AG04450 (cell line): ENCODE measurements at regions of chr19 and their contacts with region 1.

Region 1: DNA sequence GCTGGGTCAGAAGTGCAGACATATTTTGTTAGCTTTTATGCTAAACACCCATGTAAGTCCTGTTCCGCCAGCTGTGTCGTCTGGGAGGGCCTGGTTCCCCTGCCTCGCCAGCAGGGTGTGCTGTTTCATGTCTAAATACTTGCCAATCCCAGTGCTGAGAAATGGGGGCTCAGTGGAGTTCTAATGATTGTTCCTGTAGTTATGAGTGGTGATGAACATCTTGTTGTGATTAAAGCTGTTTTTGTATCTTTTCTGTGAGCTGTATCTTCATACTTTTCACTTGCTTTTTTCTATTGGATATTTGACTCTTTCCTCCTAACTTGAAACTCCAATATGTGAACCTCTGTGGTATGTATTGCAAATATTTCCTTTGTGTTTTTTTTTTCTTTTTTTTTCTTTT is 32.7 kb downstream of the KDM4B start:
- DNase-seq: no peak
- H3K4me3 ChIP-seq: no peak overlapping the region
- H3K27ac ChIP-seq: peak overlapping the region; percentile 61
- H3K27me3 ChIP-seq: no peaks in the 10 kb centered on the region
- CTCF ChIP-seq: peak; percentile 77

Region 2: GRCh38 chr19:4977299-4978174 is 24.1 kb before region 1 on chr19:
- CTCF ChIA-PET with region 1: interaction called, 20 read pairs
- POLR2A ChIA-PET with region 1: no interaction called
- DNase-seq: peak; percentile 88
- H3K4me3 ChIP-seq: peak overlapping the region; percentile 34
- H3K27ac ChIP-seq: peak overlapping the region; percentile 94
- H3K27me3 ChIP-seq: no peaks in the 10 kb centered on the region
- CTCF ChIP-seq: no peak

Region 3: DNA sequence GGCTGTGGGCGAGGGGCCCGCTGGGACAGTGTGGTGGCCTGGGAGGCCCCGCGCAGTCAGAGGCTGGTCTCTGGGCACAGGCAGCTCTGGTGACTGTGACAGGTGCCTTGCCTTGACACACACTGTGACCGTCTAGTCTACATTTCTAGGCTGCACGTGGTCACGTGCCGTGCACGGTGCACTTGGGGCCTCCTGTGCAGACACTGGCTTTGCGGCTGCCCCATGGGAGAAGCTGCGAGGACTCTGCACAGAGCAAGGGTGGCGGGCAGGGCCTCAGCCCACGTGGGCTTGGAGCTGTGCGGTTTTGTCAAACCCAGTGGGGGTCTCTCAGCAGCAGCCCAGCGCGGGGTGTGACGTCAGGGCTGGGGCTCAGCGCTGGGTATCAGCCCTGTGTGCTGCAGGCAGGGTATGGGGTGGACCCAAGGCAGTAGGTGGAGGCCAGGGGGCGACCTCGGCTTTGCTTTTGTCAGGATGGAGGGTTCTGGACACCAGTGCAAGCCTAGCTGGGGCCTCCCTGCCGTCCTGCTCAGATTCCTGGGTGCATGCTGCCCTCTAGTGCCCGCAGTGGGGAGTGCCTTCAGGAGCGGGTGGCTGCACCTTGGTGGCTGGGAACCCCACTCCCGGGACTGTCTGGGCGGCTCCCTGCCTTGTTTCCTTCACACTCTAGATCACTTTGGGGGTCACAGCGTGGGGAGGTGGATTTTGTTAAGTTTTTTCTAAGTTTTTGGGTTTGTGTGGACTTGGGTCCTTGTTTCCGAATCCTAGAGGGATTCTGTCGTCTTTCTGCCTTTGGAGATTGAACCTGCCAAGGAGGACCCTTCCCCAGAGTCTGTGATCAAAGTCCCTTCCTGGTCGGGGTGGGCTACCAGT is 29.9 kb after region 1 on chr19:
- CTCF ChIA-PET with region 1: interaction called, 19 read pairs
- POLR2A ChIA-PET with region 1: no interaction called
- DNase-seq: no peak
- H3K4me3 ChIP-seq: no peak overlapping the region
- H3K27ac ChIP-seq: no peak overlapping the region
- H3K27me3 ChIP-seq: no peaks in the 10 kb centered on the region
- CTCF ChIP-seq: peak; percentile 95

Region 4: GRCh38 chr19:5205381-5205780 is 203.8 kb after region 1 on chr19:
- CTCF ChIA-PET with region 1: no interaction called
- POLR2A ChIA-PET with region 1: no interaction called
- DNase-seq: no peak
- H3K4me3 ChIP-seq: no peak overlapping the region
- H3K27ac ChIP-seq: no peak overlapping the region
- H3K27me3 ChIP-seq: no peaks in the 10 kb centered on the region
- CTCF ChIP-seq: no peak